Ovary (tissue), 10 donors: ENCODE measurements at regions of chr21 and their contacts with region 1.

Region 1: DNA sequence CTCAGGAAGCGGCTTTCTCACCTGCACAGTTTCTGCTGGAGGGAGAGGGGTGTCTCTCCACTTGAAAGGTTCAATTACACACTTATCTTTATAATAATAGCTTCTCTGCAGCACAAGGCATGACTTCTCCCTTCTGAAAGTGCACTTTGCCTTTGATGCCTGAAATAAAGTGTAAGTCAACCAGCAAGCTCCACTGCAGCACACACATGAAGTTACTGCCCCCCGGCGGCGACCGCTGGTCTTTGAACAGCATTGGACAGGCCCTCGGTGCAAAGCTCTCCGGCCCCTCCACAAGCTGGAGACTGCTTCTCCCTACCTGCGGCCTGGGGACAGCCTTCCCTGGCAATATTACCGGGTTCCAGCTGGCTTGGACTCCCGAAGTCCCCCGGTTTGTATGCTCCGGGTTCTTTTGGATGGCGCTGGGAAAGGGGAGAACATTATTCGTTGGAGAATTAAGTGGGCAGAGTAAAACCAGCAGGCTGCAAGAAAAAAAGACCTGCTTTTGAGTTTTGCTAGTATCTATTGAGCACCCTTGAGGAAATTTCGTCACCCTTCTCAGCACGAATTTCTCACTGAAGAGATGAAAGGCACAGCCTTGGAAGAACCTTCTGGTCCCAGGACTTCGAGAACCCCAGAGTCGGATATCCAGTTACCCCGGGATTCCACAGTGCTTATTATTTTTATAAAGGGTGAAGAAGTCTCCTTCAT is 11.8 kb downstream of the RCAN1 start:
- DNase-seq: peak; percentile 48 to 80 (median 71)
- H3K4me3 ChIP-seq: no peak overlapping the region
- H3K27ac ChIP-seq: no peak overlapping the region
- H3K4me1 ChIP-seq: no peaks in the 10 kb centered on the region
- H3K27me3 ChIP-seq: no peaks in the 10 kb centered on the region
- CTCF ChIP-seq: peak; percentile 22 to 37 (median 32)
- EP300 ChIP-seq: no peak
- POLR2A ChIP-seq: no peak

Region 2: GRCh38 chr21:34669149-34669879 is 66.2 kb after region 1 on chr21:
- intact Hi-C with region 1: loop called in 1 of 4 experiments (anchors 10 kb)
- DNase-seq: peak in 3 of 5 donors; percentile 21 to 51 (median 42)
- H3K4me3 ChIP-seq: peak overlapping the region; percentile 41
- H3K27ac ChIP-seq: no peak overlapping the region
- H3K4me1 ChIP-seq: peaks cover 1% of the 10 kb centered on the region
- H3K27me3 ChIP-seq: no peaks in the 10 kb centered on the region
- CTCF ChIP-seq: no peak
- EP300 ChIP-seq: no peak
- POLR2A ChIP-seq: no peak

Region 3: DNA sequence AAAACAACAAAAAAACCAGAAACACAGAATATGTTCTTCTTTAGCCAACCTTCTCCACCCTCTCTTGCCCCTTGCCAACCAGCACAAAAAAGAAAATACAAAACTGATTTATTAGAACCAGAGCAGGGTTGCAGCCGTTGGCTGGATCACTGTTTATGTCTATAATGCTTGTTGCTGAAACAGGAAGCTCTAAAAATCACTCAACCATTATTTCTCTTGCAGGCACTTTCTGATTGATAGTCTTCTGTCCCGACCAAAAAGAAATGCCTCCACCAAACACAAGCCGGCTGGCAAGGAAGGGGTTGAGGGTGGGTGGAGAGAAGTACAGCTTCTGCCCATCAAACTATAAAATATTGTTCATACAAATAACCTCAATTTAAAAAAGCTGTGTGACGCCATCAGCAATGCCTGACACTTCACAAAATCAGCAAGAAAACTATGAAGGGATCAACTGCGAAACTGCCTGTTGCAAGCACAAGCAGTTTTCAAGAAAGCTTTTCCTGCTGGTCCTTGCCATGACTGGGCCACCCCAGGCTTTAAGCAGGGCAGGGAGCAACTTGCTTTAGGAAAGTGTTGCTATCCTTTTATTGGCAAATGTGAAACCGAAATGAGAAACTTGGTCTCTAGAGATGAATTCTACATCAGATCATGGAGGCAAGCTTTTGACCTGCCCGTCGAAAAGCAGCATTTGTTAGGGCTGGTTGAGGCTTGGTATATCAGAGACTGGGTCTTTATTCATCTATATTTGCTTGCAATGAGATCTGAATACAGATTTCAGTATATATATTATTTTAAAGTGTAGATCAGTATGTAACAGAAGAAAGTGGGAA is 271.7 kb after region 1 on chr21:
- intact Hi-C with region 1: no loop called
- DNase-seq: no peak
- H3K4me3 ChIP-seq: no peak overlapping the region
- H3K27ac ChIP-seq: no peak overlapping the region
- H3K4me1 ChIP-seq: peaks cover 3% of the 10 kb centered on the region
- H3K27me3 ChIP-seq: peaks cover 5% of the 10 kb centered on the region
- CTCF ChIP-seq: no peak
- EP300 ChIP-seq: no peak
- POLR2A ChIP-seq: no peak

Region 4: GRCh38 chr21:34888569-34889319 is 285.6 kb after region 1 on chr21:
- intact Hi-C with region 1: no loop called
- DNase-seq: peak; percentile 87 to 93 (median 90)
- H3K4me3 ChIP-seq: peak overlapping the region; percentile 54
- H3K27ac ChIP-seq: peak overlapping the region; percentile 34 to 80
- H3K4me1 ChIP-seq: peaks cover 2% of the 10 kb centered on the region
- H3K27me3 ChIP-seq: no peaks in the 10 kb centered on the region
- CTCF ChIP-seq: no peak
- EP300 ChIP-seq: peak; percentile 42
- POLR2A ChIP-seq: peak; percentile 67